ENCODE measurements at regions of chr9 and their contacts with region 1.

Region 1: DNA sequence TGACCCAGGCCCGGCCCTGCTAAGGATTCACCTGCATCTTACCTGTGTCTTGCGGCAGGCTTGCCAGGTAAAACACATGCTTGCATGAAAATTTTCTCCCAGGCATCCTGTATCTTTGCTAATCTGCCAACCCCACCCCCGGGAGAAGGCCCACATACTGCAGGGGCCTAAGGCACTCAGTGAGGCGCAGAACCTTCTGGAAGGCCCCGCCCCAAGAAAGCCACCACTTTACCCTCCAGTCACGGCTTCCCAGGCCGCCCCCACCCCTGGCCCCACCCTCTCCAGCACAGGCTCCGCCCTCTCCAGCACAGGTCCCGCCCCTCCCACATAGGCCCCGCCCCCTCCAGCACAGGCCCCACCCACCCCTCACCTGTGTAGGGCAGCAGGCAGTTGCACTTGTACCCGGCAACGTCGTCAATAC is 29.8 kb upstream of the SEC16A start:
- DNase-seq: peak; percentile 54
- H3K4me3 ChIP-seq: no peak overlapping the region
- H3K27ac ChIP-seq: peak overlapping the region; percentile 99
- H3K4me1 ChIP-seq: peaks cover 19% of the 10 kb centered on the region
- H3K27me3 ChIP-seq: no peaks in the 10 kb centered on the region
- CTCF ChIP-seq: no peak
- POLR2A ChIP-seq: no peak

Region 2: DNA sequence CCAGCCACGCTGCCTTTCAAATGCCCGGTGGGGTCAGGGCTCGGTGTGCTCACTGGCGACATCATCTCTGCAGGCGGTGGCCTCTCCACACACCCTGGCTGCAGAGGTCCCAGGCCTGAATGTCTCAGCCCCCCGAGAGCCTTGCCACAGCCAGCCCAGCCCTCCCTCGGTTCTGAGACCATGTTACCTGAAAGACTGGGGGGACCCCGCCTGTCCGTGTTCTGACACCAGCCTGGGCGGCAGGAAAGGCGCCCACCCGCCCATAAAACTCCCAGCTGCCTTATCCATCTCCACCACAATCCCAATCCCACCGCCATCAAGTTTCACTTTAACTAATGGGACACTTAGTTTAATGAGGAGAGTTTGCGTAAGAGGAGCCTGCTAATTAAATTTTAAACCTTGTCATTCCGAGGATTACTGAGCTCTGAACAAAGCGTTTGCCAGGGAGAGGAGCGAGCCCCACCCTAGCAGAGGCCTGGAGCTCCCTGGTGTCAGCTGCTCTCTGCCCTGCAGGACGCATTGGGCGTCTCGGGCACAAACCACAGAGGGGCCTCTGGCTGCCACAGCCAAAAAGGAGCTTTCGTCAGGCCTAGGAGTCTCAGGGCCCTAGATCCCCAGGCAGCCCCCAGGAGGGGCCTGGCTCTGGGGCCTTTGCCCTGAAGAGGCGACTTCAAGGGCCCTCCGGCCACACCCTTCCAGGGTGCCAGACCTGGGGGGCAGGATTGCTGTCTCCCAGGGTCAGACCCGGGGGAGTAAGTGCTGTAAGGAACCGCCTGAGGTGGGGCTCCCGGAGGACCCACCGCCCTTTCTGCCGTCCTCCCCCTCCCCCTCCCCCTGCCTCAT is 323.0 kb before region 1 on chr9:
- CTCF ChIA-PET with region 1: no interaction called
- POLR2A ChIA-PET with region 1: no interaction called
- dilution Hi-C with region 1: no loop called
- intact Hi-C with region 1: no loop called
- DNase-seq: no peak
- H3K4me3 ChIP-seq: no peak overlapping the region
- H3K27ac ChIP-seq: no peak overlapping the region
- H3K4me1 ChIP-seq: no peaks in the 10 kb centered on the region
- H3K27me3 ChIP-seq: peaks cover 27 to 47% of the 10 kb centered on the region in 2 experiments
- CTCF ChIP-seq: no peak
- POLR2A ChIP-seq: no peak

Region 3: GRCh38 chr9:136527721-136528691 is 15.3 kb after region 1 on chr9:
- CTCF ChIA-PET with region 1: no interaction called
- POLR2A ChIA-PET with region 1: no interaction called
- dilution Hi-C with region 1: no loop called
- intact Hi-C with region 1: loop called (anchors 1 kb)
- DNase-seq: no peak
- H3K4me3 ChIP-seq: no peak overlapping the region
- H3K27ac ChIP-seq: peak overlapping the region; percentile 89
- H3K4me1 ChIP-seq: peaks cover 45% of the 10 kb centered on the region
- H3K27me3 ChIP-seq: no peaks in the 10 kb centered on the region
- CTCF ChIP-seq: no peak
- POLR2A ChIP-seq: no peak

Region 4: DNA sequence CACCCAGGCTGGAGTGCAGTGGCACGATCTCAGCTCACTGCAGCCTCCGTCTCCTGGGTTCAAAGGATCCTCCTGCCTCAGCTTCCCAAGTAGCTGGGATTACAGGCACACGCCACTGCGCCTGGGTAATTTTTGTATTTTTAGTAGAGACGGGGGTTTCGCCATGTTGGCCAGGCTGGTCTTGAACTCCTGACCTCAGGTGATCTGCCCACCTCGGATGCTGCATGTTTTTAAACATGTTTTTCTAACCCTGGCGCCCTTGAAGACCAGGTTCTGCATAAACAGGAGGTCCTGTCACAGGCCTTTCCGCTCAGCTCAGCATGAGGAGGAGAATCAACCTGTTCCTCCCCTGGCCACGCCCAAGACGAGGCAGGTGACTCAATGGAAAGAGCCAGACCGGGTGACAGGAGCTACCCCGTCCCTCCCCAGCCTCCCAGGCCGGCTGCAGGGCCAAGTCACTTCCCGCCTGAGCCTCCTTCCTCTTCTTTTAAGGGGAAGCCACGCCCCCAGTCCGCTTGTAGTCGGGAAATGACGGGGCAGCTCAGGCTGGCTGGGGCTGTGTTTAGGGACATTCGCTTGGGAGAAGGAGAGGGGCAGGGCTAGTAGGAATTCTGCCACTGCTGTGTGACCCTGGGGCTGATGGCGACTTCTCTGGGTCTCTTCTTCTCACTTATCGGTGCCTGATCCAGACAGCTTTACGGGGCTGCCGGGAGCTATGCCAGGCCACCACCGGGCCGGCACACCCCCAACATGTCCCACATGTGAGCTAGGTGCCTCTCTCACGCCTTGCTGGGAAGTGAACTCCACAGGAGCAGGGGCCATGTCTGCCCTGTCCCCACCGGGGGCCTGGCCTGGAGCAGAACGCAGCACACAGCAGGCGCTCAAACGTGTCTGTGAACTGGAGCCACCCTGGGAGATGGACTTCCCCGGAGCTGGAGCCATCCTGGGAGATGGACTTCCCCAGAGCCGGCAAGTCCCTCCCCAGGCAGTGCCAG is 27.1 kb after region 1 on chr9:
- CTCF ChIA-PET with region 1: interaction called, 3 read pairs
- POLR2A ChIA-PET with region 1: interaction called, 3 read pairs
- dilution Hi-C with region 1: no loop called
- intact Hi-C with region 1: loop called (anchors 1 kb)
- DNase-seq: peak; percentile 95
- H3K4me3 ChIP-seq: peak overlapping the region in 1 of 3 experiments; percentile 17
- H3K27ac ChIP-seq: peak overlapping the region; percentile 80
- H3K4me1 ChIP-seq: peaks cover 59% of the 10 kb centered on the region
- H3K27me3 ChIP-seq: no peaks in the 10 kb centered on the region
- CTCF ChIP-seq: no peak
- POLR2A ChIP-seq: no peak

Region 5: DNA sequence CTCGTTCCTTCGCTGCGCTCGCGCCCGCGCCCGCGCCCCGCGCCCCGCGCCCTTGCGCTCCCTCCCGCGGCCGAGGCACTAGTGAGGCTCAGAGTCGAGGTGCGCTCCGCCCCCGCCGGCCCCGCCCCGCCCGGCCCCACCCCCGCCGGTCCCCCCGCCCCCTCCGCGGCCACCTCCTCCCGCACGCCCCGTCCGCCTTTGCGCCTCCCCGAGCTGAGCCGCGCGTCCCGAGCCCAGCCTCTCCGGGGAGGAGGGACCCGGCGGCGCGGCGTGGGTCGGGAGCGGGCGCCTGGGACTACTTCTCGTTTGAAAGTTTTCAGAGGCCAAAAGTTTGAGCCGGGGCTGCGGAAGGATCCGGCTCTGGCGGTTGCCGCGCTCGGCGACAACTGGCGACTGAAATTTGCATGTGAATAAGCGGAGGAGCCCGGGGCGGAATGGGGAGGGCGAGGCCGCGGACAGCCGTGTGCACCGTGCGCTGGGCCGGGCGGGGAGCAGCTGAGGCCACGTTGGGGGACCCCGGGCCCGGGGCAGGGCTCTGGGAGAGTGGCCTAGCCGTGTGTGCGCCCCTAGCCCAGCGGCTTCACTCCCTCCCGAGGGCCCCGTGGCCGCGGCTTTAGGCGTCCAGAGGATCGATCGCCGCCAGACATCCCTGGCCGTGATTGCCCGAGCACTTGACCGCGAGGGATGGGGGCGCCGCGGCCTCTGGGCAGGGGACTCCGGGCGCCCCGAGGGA is 33.5 kb after region 1 on chr9 and contains the start of gene NOTCH1:
- CTCF ChIA-PET with region 1: interaction called, 3 read pairs
- POLR2A ChIA-PET with region 1: interaction called, 3 read pairs
- dilution Hi-C with region 1: no loop called
- intact Hi-C with region 1: loop called (anchors 1 kb)
- DNase-seq: peak; percentile 88
- H3K4me3 ChIP-seq: peak within 1 kb of the TSS; percentile 81 to 98 (median 91)
- H3K27ac ChIP-seq: peak within 1 kb of the TSS; percentile 68
- H3K4me1 ChIP-seq: peaks cover 45% of the 10 kb centered on the region
- H3K27me3 ChIP-seq: no peaks in the 10 kb centered on the region
- CTCF ChIP-seq: no peak
- POLR2A ChIP-seq: peak; percentile 6
- total RNA-seq, gene NOTCH1: 153 and 161 TPM in 2 replicates

Region 6: GRCh38 chr9:136614372-136614922 is 101.8 kb after region 1 on chr9:
- CTCF ChIA-PET with region 1: no interaction called
- POLR2A ChIA-PET with region 1: no interaction called
- dilution Hi-C with region 1: no loop called
- intact Hi-C with region 1: loop called (anchors 1 kb)
- DNase-seq: peak; percentile 94
- H3K4me3 ChIP-seq: no peak overlapping the region
- H3K27ac ChIP-seq: peak overlapping the region; percentile 97
- H3K4me1 ChIP-seq: peaks cover 22% of the 10 kb centered on the region
- H3K27me3 ChIP-seq: no peaks in the 10 kb centered on the region
- CTCF ChIP-seq: no peak
- POLR2A ChIP-seq: no peak

Region 7: GRCh38 chr9:136631038-136632000 is 118.7 kb after region 1 on chr9:
- CTCF ChIA-PET with region 1: interaction called, 4 read pairs
- POLR2A ChIA-PET with region 1: no interaction called
- dilution Hi-C with region 1: no loop called
- intact Hi-C with region 1: loop called (anchors 1 kb)
- DNase-seq: peak; percentile 74
- H3K4me3 ChIP-seq: no peak overlapping the region
- H3K27ac ChIP-seq: no peak overlapping the region
- H3K4me1 ChIP-seq: no peaks in the 10 kb centered on the region
- H3K27me3 ChIP-seq: no peaks in the 10 kb centered on the region
- CTCF ChIP-seq: peak; percentile 86 to 88
- POLR2A ChIP-seq: no peak